Heart right ventricle (tissue), 16 donors: ENCODE measurements at regions of chr5 and their contacts with region 1.

Region 1: DNA sequence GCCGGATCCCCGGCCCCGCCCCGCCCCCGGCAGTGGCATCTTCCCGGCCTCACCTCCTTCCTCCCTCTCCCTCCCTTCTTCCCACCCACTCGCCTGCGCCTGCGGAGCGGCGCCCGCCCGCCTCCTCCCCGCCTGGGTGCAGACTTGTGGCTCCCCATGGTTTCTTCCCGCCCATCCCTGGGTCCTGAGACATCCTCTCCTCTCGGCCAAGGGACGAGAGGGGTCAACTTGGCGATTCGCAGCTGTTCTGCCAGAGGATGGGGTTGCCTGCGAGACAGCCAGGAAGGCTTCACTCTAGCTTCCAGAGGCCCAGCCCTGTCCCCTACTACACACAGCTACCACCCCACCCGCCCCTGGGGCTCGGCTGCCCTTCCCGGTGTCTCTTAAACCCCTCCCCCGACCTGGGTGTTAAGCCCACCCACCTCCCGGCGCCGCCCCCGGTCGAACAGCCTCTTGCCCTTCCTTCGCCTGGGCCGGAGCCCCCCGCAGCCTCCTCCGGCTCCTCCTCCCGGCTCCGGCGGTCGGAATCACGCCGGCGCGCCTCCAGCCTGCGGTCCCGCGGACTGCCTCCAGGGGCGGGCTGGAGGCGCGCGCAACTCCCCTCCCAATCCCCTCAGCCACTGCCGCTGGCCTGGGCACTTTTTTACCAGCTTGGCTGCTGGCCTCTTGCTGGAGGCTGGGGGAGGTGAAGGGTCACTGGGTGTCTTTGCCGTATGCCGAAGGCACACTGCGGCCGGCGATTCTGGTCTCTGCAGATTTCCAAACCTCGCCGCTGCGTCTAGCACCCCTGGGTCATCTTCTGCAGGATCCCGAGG is 1.9 kb downstream of the JADE2 start:
- DNase-seq: peak; percentile 88 to 89
- ATAC-seq: peak; percentile 54 to 79 (median 68)
- H3K4me3 ChIP-seq: peak overlapping the region; percentile 66 to 99 (median 90)
- H3K27ac ChIP-seq: peak overlapping the region; percentile 96 to 100 (median 98)
- H3K4me1 ChIP-seq: peaks cover 25 to 57% (median 48%) of the 10 kb centered on the region in 9 donors
- H3K27me3 ChIP-seq: no peaks in the 10 kb centered on the region
- CTCF ChIP-seq: peak; percentile 72 to 87 (median 80)

Region 2: DNA sequence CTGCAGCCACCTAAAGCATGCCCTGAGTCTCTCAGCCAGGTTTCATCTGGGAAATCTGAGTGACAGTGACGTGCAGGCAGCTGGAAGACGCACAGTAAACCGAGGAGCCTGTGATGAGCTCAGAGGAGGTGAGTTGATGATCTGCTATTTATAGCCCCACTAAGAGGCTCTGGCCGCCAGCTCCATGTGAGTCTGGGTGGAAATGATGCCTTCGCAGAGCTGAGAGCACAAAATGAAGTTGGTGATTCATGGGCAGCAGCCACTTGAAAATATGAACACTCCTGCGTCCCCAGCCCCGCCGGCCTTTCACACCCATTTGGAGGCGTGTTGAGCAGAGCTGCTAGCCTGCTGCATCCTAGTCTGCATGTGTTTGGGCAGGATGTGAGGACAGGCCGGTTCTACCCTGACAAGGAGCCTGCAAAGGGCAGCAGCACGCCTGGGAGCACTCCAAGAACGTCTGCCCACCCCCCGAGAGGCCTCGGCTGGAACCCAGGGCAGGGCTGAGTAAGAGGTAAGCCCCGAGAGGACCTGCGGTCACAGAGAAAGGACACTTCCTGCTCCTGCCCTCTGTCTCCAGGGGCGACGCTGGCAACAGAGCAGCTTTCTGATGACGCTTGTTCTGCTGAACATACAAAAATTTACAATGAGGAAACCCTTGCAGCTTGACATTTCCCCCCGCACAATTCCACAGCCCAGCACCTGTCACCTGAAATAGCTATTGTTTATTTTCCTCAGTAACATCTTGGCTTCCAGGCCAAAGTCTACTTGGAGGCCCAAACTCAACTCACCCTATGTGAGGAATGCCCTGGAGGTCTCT is 90.6 kb before region 1 on chr5:
- intact Hi-C with region 1: loop called in 1 of 10 experiments (anchors 2 kb)
- DNase-seq: peak; percentile 52 to 70
- ATAC-seq: peak; percentile 51 to 89 (median 81)
- H3K4me3 ChIP-seq: peak overlapping the region in 3 of 10 donors; percentile 20 to 24 (median 23)
- H3K27ac ChIP-seq: peak overlapping the region; percentile 65 to 91 (median 80)
- H3K4me1 ChIP-seq: peaks cover 25 to 41% (median 38%) of the 10 kb centered on the region in 9 donors
- H3K27me3 ChIP-seq: no peaks in the 10 kb centered on the region
- CTCF ChIP-seq: no peak

Region 3: GRCh38 chr5:134503088-134503946 is 24.0 kb before region 1 on chr5:
- intact Hi-C with region 1: loop called in 1 of 10 experiments (anchors 2 kb)
- DNase-seq: peak; percentile 64 to 68
- ATAC-seq: peak; percentile 56 to 87 (median 66)
- H3K4me3 ChIP-seq: no peak overlapping the region
- H3K27ac ChIP-seq: peak overlapping the region; percentile 23 to 86 (median 78)
- H3K4me1 ChIP-seq: peaks cover 4 to 46% (median 36%) of the 10 kb centered on the region in 9 donors
- H3K27me3 ChIP-seq: no peaks in the 10 kb centered on the region
- CTCF ChIP-seq: no peak

Region 4: GRCh38 chr5:134568761-134569695 is 41.7 kb after region 1 on chr5:
- intact Hi-C with region 1: loop called in 5 of 10 experiments (anchors 2 to 10 kb)
- DNase-seq: peak; percentile 85 to 86
- ATAC-seq: peak; percentile 46 to 81 (median 72)
- H3K4me3 ChIP-seq: no peak overlapping the region
- H3K27ac ChIP-seq: peak overlapping the region; percentile 61 to 92 (median 86)
- H3K4me1 ChIP-seq: peaks cover 38 to 69% (median 51%) of the 10 kb centered on the region in 9 donors
- H3K27me3 ChIP-seq: no peaks in the 10 kb centered on the region
- CTCF ChIP-seq: no peak